Activated CD8-positive, alpha-beta memory T cell treated with anti-CD3 and anti-CD28 coated beads, Interleukin-2, amount 10 ng/mL, durations not matched to agents 7 days and 5 days (primary cell): ENCODE measurements at regions of chr3 and their contacts with region 1.

Region 1: DNA sequence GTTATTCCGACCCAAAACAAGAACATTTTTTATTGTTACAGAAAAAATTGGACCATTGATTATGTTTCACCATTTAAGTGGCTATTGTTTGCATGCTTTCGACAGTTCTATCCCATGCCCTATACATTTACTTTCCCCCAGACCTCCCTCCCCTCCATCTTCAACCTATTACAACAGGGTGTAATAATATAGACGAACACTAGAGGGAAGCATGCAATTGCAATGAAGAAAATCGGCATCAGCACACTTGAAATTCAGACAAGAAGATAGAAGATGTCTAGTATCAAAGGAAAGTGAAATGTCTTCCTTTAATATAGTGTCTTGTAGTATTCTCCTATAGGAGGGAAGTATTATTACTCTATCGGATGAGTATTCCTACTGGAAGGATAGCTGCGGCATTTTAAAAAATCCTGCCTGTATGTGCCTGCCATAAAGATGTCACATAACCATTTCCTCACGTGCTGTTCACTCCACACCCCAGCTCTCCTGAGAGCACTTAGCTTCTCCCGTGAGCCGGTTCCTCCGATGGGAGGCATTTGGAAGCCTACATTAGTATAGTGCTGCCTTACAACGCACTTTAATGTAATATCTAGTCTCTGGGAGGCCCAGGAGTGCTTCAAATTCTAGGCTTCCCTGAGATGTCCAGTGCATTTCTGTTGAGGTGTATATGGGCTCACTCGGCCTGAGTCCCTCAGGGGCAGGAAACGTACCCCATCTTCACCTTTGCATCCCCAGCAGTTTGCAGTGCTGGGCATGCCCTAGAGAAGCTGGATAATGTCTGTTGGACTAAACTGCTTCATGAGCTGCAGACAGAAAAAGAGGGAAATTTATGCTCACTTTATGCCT is 17.8 kb upstream of the ERICH6 start:
- DNase-seq: no peak
- ATAC-seq: peak; percentile 77
- H3K4me3 Mint-ChIP-seq: no peak overlapping the region
- H3K27ac Mint-ChIP-seq: no peak overlapping the region
- H3K4me1 Mint-ChIP-seq: peaks cover 17% of the 10 kb centered on the region
- H3K27me3 Mint-ChIP-seq: no peaks in the 10 kb centered on the region

Region 2: GRCh38 chr3:150703299-150704134 is 18.0 kb before region 1 on chr3 and contains the start of gene ERICH6:
- CTCF ChIA-PET with region 1: interaction called, 17 read pairs
- DNase-seq: peak; percentile 93
- ATAC-seq: peak; percentile 97
- H3K4me3 Mint-ChIP-seq: peak within 1 kb of the TSS; percentile 89
- H3K27ac Mint-ChIP-seq: peak within 1 kb of the TSS; percentile 95
- H3K4me1 Mint-ChIP-seq: peaks cover 21% of the 10 kb centered on the region
- H3K27me3 Mint-ChIP-seq: peaks cover 10% of the 10 kb centered on the region
- total RNA-seq, gene ERICH6: not detected

Region 3: DNA sequence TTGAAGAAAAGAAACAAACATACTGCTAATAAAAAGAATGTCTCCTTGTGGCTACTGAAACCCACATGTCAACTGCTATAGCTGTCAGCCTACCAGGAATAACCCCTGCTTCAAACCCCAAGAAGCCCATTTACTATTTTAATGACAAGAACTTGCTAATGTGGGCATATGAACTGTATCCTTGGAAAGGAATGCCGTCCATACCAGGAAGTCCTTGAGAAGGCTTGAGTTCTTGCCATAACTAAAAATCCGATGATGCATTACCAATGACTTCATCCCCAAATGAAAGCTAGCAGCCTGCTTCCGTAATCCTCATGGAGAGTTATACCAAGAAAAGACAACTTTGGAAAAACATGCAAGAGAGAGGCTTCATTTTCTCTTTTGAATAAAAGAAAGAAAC is 148.9 kb after region 1 on chr3:
- CTCF ChIA-PET with region 1: interaction called, 26 read pairs
- DNase-seq: no peak
- ATAC-seq: no peak
- H3K4me3 Mint-ChIP-seq: no peak overlapping the region
- H3K27ac Mint-ChIP-seq: no peak overlapping the region
- H3K4me1 Mint-ChIP-seq: peaks cover 14% of the 10 kb centered on the region
- H3K27me3 Mint-ChIP-seq: peaks cover 13% of the 10 kb centered on the region